PC-9 (cell line): ENCODE measurements at regions of chr2 and their contacts with region 1.

Region 1: DNA sequence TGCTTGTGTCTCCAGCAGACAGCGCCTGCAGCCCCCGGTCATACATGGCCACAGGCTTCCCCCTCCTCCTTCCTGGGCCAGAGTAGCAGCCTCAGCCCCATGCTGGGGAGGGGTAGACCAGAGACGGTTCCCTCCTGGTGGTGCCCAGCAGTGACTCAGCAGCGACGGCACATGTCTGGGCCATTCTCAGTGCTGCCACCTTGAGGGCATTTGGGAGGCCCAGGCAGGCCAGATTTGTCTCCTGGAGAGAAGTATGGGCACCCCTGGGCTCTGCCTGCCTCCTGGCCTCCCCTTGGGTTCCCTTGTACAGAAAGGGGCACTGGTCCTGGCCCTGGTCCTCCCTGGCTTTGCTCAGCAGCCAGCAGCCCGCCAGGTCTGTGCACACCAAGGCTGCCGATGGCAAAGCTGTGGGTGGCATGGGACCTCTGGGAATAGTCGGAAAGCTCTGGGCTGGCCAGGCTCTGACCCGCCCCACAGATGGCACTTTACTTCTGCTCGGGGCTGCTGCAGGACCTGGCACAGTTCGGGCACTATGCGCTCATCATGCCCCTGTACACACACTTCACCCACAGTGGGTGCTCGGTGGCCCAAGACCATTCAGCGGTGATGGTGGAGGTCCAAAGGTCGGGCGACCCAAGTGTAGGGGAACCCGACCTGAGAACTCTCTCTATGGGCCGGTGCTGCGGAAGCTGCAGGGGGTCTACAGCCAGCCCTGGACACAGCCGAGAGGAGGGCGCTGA is 11.4 kb upstream of the ALPI start:
- DNase-seq: peak in 1 of 2 experiments; percentile 61
- H3K4me3 ChIP-seq: no peak overlapping the region
- H3K27ac ChIP-seq: no peak overlapping the region
- H3K4me1 ChIP-seq: no peaks in the 10 kb centered on the region
- H3K27me3 ChIP-seq: no peaks in the 10 kb centered on the region
- CTCF ChIP-seq: peak; percentile 66

Region 2: DNA sequence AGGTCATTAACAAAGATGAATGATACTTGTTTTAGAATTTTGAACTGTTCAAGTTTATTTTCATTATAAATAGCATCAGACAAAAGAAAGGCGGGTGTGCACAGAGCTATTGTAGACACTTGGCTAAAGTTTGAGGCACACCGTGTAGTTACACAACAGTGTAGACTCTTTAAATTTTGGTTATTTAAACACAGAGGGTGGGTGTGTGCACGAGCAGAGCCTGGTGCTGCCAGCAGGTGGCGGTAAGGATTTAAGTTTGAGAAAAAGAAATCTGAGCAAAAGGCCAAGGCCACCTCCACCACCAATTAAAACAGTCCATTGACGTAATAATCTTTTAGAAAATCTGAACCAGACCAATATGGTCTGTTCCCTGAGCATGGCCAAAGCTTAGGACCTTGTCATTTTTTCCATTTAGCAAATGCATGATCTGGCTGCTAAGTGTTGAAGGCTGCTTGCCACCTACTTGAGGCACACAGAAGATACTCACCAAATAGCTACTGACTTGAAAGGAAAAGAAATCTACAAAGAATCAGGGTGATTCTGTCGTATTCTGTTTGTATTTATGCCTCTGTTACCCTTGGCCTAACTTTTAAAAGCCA is 644.0 kb before region 1 on chr2:
- CTCF ChIA-PET with region 1: no interaction called
- POLR2A ChIA-PET with region 1: no interaction called
- intact Hi-C with region 1: loop called (anchors 5 kb)
- DNase-seq: peak in 1 of 2 experiments; percentile 23
- H3K4me3 ChIP-seq: no peak overlapping the region
- H3K27ac ChIP-seq: no peak overlapping the region
- H3K4me1 ChIP-seq: no peaks in the 10 kb centered on the region
- H3K27me3 ChIP-seq: no peaks in the 10 kb centered on the region
- CTCF ChIP-seq: peak; percentile 76

Region 3: DNA sequence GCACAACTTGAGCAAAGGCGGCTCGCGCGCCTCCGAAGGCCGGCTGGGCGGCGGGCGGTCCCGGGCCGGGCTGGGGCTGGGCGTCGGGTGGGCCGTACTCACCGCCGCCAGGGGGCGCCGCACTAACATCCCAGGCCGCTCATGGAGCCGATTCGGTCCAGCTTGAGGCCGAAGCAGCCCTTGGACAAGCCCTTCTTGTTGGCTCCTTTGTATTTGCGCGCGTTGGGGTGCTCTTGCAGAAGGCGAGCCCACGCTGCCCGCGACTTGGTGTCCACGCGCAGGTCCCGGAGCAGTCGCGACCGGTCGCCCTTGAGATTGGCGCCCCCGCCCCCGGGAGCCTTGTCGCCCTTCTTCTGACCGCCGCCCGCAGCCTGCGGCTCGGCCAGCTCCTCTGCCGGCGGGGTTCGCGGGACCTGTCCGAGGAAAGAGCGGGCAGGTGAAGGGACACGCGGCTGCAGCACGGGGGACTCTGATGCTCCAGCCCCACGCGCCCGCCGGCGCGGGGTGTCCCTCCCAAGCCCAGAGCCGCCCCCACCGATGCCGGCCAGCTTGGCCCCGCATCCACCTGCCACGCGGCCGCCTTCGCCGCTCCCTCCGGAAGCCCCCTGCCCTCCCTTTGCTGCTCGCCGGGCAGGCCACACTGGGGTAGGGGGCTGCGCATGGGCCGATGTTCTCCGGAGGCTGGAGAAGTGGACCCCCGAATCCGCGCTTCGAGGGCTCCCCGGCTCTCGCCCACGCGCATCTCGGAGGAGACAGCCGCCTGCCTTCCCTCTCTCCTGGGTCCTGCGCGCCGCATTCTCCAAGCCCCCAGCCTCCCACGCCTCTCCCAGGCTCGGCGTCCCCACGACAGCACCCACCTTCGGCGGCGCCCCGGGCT is 519.0 kb before region 1 on chr2:
- CTCF ChIA-PET with region 1: interaction called, 4 read pairs
- POLR2A ChIA-PET with region 1: no interaction called
- intact Hi-C with region 1: loop called (anchors 5 kb)
- DNase-seq: peak in 1 of 2 experiments; percentile 72
- H3K4me3 ChIP-seq: no peak overlapping the region
- H3K27ac ChIP-seq: no peak overlapping the region
- H3K4me1 ChIP-seq: no peaks in the 10 kb centered on the region
- H3K27me3 ChIP-seq: peaks cover 22% of the 10 kb centered on the region
- CTCF ChIP-seq: peak; percentile 77

Region 4: DNA sequence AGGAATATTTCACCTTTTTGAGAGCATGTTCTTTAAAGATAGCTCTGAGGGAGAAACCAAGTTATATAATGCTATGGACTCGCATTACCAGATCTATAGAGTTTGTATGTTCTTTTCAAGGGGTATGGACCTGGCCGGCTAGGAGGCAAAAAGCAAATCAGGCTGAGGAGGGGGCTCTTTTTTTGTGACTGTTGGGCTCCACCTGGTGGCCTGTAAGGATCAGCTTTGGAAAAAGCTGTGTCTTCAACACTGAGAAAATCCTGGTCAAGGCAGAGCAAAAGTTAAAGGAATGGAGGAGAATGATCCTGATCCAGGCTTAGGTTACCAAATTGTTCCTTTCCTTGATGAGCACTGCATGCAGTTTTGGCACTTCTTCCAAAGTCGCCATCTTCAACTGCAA is 302.5 kb before region 1 on chr2:
- CTCF ChIA-PET with region 1: no interaction called
- POLR2A ChIA-PET with region 1: no interaction called
- intact Hi-C with region 1: loop called (anchors 5 kb)
- DNase-seq: peak in 1 of 2 experiments; percentile 5
- H3K4me3 ChIP-seq: no peak overlapping the region
- H3K27ac ChIP-seq: no peak overlapping the region
- H3K4me1 ChIP-seq: no peaks in the 10 kb centered on the region
- H3K27me3 ChIP-seq: no peaks in the 10 kb centered on the region
- CTCF ChIP-seq: peak; percentile 74

Region 5: GRCh38 chr2:232521959-232522622 is 77.5 kb after region 1 on chr2:
- CTCF ChIA-PET with region 1: no interaction called
- POLR2A ChIA-PET with region 1: no interaction called
- intact Hi-C with region 1: loop called (anchors 2 kb)
- DNase-seq: peak in 1 of 2 experiments; percentile 58
- H3K4me3 ChIP-seq: no peak overlapping the region
- H3K27ac ChIP-seq: no peak overlapping the region
- H3K4me1 ChIP-seq: no peaks in the 10 kb centered on the region
- H3K27me3 ChIP-seq: peaks cover 55% of the 10 kb centered on the region
- CTCF ChIP-seq: peak; percentile 75